Aorta (tissue), 5 donors: ENCODE measurements at regions of chr13 and their contacts with region 1.

Region 1: DNA sequence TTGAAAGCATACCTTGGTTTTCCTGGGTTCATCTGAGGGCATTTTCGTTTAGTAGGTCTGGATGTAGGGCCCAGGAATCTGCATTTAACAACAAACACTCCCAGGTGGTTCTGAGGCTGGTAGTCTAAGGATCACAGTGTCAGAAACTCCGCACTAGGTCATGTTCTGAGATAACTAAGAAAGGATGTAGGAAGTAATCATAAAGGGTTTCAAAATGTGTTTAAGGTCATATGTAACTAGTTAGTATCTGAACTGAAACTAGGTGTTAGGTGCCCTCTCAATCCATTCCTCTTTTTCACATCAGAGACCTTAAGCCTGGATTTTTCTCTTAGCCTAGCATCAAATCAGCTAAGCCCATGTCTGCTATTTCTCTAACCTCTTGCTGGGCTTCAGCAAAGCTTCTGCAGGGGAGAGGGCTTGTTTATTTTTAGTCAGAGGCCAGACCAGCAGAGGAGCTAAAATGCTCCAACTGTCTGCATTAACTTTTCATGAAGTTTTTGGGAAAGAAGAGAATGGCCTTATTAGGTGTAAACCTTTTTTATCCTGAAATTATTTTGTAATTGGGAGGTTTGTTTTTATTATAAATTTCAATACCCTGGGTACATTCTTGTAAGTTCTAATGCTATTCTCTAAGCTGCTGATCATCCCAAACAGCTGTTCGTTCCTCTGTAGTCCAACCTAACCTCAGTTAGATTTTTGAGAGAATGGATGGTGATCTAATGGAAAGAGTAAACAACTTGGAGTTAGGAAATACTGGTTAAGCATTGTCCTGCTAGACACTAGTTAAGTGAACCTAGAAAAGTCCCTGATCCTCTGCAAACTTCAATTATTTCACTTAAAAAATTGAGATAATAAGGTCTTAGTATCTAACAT is 262.8 kb upstream of the RFC3 start:
- DNase-seq: no peak
- ATAC-seq: no peak
- H3K4me3 ChIP-seq: no peak overlapping the region
- H3K27ac ChIP-seq: peak overlapping the region in 1 of 2 donors; percentile 19
- H3K4me1 ChIP-seq: no peaks in the 10 kb centered on the region
- H3K27me3 ChIP-seq: no peaks in the 10 kb centered on the region

Region 2: DNA sequence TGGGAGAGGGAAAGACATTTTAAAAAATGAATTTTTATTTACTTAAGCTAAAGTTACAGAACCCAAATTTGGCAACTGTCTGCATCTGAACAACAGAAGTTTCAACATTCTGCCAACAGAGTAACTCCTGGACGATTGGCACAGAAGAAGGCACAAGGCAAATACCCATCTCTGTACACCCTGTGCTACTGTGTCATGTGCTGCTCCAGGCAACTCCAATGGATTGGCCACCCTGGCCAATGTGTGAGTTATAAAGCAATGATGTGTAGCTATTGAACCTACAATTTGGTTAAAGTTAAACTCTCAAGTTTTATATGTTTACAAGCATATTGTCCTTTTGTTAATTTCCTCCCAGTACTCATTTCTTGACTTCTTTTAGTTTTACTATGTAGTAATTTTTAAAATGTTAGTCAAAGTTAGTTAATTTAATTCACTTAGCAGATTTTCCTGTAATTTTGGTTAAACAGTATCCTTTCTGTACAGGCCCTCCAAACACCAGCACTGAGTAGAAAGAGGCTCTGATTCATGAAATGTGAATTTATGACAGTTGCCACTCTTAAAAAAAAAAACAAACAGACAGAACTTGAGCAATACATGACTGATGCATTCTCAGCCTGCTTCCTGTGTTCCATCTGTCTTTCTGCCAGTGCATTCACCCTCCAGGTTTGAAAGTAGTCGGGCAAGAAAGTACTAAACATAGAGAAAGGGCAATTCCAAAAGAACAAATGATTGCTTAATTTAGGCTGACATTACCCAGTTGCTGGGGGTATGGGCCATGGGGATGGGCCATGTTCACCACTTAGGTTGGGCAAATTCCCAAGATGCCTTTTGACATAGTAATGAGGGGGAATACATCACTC is 275.5 kb before region 1 on chr13:
- intact Hi-C with region 1: no loop called
- DNase-seq: no peak
- ATAC-seq: no peak
- H3K4me3 ChIP-seq: no peak overlapping the region
- H3K27ac ChIP-seq: peak overlapping the region; percentile 57 to 74
- H3K4me1 ChIP-seq: peaks cover 2 to 25% of the 10 kb centered on the region in 2 donors
- H3K27me3 ChIP-seq: no peaks in the 10 kb centered on the region

Region 3: DNA sequence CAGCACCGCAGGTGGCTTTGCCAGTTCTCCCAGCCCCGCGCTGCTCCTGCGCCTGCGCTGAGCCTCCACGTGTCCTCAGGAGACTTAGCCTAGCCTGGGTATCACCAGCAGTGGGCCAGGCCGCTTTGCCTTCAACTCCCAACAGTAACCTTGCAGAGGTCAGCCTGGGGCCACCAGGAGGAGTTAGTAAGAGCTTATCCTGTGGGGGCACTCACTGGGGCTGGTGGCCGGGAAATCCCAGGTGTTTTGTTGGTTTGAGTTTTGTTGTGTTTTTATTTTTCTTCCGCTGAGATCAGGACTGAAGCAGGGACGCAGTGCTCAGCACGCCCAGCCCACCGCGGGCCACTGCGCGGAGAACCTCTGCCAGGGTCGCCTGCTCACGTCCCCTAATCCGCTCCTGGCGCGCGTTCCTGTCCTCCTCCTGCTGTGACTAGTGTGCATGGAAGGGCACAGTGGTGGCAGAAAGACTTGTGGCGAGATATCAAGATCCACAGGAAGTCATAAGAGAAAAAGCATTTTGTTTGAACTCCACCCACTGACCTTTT is 55.4 kb after region 1 on chr13:
- intact Hi-C with region 1: loop called in 1 of 2 experiments (anchors 5 kb)
- DNase-seq: peak; percentile 79 to 89
- ATAC-seq: peak; percentile 89
- H3K4me3 ChIP-seq: peak overlapping the region in 1 of 2 donors; percentile 2
- H3K27ac ChIP-seq: peak overlapping the region; percentile 68 to 81
- H3K4me1 ChIP-seq: peaks cover 0 to 4% of the 10 kb centered on the region in 2 donors
- H3K27me3 ChIP-seq: no peaks in the 10 kb centered on the region

Region 4: DNA sequence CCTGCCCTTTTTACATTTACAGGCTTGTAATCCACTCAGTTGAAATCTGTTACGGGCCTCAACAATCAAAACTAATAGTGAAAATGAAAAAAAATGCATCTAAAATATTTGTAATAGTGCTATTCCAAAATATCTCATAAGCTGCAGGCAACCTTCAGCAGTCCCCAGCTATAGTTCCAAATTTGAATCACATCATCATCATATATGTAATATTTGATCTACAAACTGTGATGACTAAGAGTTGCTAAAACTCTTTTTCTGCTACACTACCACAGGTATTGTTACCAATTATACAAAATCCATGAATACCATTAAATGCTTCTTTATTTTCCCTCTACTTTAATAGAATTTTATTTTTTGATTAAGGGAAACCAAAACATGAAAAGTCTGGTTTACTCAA is 141.4 kb after region 1 on chr13:
- intact Hi-C with region 1: no loop called
- DNase-seq: no peak
- ATAC-seq: no peak
- H3K4me3 ChIP-seq: no peak overlapping the region
- H3K27ac ChIP-seq: no peak overlapping the region
- H3K4me1 ChIP-seq: no peaks in the 10 kb centered on the region
- H3K27me3 ChIP-seq: no peaks in the 10 kb centered on the region

Region 5: GRCh38 chr13:33723772-33724435 is 168.7 kb after region 1 on chr13:
- intact Hi-C with region 1: loop called in 1 of 2 experiments (anchors 5 kb)
- DNase-seq: peak in 1 of 2 donors; percentile 82
- ATAC-seq: peak; percentile 87
- H3K4me3 ChIP-seq: no peak overlapping the region
- H3K27ac ChIP-seq: no peak overlapping the region
- H3K4me1 ChIP-seq: no peaks in the 10 kb centered on the region
- H3K27me3 ChIP-seq: no peaks in the 10 kb centered on the region

Region 6: GRCh38 chr13:35164324-35164932 is 1609.3 kb after region 1 on chr13:
- intact Hi-C with region 1: loop called in 1 of 2 experiments (anchors 10 kb)
- DNase-seq: no peak
- ATAC-seq: no peak
- H3K4me3 ChIP-seq: no peak overlapping the region
- H3K27ac ChIP-seq: no peak overlapping the region
- H3K4me1 ChIP-seq: no peaks in the 10 kb centered on the region
- H3K27me3 ChIP-seq: no peaks in the 10 kb centered on the region